GM23248 (cell line): ENCODE measurements at regions of chr6 and their contacts with region 1.

Region 1: DNA sequence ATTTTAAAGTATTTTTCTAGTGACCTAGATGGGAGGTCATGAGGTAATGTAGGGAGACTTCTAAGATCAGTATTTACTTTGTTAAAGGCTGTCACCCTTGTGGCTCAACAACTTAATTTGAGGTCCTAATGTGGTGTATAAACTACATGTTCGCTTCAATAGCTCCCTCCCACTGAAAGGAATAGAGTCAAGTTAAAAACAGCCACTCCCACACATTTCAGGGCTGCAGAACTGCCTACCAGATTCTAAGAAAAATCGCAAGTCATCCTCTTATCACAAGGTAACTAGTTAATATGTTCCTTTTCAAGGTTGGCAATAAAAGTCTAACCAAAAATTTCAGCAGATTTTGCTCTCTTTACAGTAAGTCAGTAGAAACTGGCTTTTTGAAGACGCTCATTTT is 15.1 kb downstream of the GSTA1 start:
- DNase-seq: peak; percentile 9
- H3K4me3 ChIP-seq: no peak overlapping the region
- H3K27ac ChIP-seq: no peak overlapping the region
- H3K4me1 ChIP-seq: peaks cover 14% of the 10 kb centered on the region
- H3K27me3 ChIP-seq: no peaks in the 10 kb centered on the region

Region 2: GRCh38 chr6:52829046-52829817 is 40.8 kb after region 1 on chr6:
- in situ Hi-C with region 1: loop called (anchors 5 kb)
- DNase-seq: no peak
- H3K4me3 ChIP-seq: no peak overlapping the region
- H3K27ac ChIP-seq: no peak overlapping the region
- H3K4me1 ChIP-seq: peaks cover 6% of the 10 kb centered on the region
- H3K27me3 ChIP-seq: no peaks in the 10 kb centered on the region